GM12878 (cell line): ENCODE measurements at regions of chr16 and their contacts with region 1.

Region 1: DNA sequence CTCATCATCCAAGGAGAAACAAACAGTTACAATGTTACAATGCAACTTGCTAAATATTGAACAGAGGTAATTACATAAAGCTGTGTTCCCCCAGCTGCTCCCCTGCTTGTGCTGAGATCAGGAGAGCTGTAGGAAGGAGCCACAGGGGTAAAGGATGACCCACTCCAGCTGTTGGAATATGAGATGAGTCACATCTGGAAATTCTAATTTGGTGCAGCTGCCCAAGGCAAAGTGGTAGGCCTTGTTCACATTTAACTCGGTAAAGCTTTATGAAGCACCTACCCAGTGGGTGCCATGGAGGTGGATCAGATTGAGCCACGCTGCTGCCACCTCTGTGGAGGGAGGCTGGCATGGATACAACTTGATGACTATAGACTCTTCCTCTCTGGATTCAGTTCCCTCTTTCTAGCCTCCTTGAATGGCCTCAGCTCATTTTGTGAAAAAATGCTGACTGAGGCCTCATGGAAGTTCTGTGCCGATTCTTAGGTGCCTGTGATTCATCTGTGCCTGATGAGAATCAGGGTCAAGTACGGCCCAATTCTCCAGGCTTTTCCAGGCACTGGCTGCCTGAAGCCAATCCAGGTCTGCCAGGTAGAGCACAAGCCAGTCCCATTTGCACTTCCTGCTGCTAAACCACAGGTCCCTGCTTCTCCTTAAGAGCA is 7.4 kb downstream of the ZNF689 start:
- DNase-seq: no peak
- ATAC-seq: no peak
- H3K4me3 ChIP-seq: no peak overlapping the region
- H3K27ac ChIP-seq: no peak overlapping the region
- H3K4me1 ChIP-seq: no peaks in the 10 kb centered on the region; the same call in 1 of the 2 replicates
- H3K27me3 ChIP-seq: no peaks in the 10 kb centered on the region
- CTCF ChIP-seq: no peak
- EP300 ChIP-seq: no peak
- POLR2A ChIP-seq: 0 out of 2 replicates have a peak, but pooled peaks have one; percentile 10
- RAD21 ChIP-seq: no peak

Region 2: DNA sequence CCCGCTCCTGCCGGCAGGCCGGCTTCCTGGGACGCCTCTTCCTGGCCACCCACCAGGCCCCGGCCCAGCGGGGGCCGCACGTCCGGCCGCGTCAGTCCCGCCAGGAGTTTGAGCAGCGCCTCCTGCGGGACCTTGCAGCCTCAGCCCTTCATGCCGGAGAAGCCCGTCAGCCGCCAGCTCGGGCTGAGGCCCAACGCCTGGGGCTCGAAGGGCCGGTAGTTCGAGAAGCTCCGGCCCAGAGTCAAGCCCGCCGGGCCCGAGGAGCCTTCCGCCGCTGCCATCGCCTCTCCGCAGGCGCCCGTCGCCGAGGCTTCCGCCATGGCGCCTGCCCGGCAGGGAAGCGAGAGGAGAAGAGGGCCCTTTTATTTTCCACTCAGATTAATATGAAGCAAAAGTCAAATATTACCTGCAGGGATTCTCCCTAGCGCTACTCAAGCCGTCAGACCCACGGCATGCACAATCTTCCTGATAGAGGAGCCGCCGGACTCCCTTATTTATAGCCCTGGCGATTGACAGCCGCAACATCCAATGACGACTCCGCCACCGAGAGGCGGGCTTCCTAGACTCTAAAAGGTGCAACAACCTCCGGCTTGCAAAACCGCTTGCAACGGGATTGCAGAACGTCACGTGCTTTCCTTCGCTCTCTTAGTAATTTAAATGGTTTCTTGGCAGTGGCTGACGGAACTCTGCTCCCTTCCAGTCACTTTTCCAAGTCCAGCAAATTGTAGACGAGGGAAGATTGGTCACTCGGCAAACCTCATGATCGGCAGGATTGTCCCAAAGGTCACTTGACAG is 157.1 kb before region 1 on chr16 and contains the start of gene SEPHS2:
- CTCF ChIA-PET with region 1: interaction called, 18 read pairs
- POLR2A ChIA-PET with region 1: interaction called, 3 read pairs
- RAD21 ChIA-PET with region 1: interaction called, 6 read pairs
- SMC1A ChIA-PET with region 1: interaction called, 8 read pairs
- in situ Hi-C with region 1: no loop called
- intact Hi-C with region 1: no loop called
- DNase-seq: peak; percentile 84
- ATAC-seq: peak; percentile 94
- H3K4me3 ChIP-seq: peak within 1 kb of the TSS; percentile 79
- H3K27ac ChIP-seq: peak within 1 kb of the TSS; percentile 85
- H3K4me1 ChIP-seq: peaks cover 10% of the 10 kb centered on the region
- H3K27me3 ChIP-seq: no peaks in the 10 kb centered on the region
- CTCF ChIP-seq: peak; percentile 38 to 52 (median 49); a peak in 5 of 6 replicates
- EP300 ChIP-seq: no peak
- POLR2A ChIP-seq: peak; percentile 90
- RAD21 ChIP-seq: no peak
- polyA plus RNA-seq, gene SEPHS2: 21.6 to 37.4 TPM

Region 3: DNA sequence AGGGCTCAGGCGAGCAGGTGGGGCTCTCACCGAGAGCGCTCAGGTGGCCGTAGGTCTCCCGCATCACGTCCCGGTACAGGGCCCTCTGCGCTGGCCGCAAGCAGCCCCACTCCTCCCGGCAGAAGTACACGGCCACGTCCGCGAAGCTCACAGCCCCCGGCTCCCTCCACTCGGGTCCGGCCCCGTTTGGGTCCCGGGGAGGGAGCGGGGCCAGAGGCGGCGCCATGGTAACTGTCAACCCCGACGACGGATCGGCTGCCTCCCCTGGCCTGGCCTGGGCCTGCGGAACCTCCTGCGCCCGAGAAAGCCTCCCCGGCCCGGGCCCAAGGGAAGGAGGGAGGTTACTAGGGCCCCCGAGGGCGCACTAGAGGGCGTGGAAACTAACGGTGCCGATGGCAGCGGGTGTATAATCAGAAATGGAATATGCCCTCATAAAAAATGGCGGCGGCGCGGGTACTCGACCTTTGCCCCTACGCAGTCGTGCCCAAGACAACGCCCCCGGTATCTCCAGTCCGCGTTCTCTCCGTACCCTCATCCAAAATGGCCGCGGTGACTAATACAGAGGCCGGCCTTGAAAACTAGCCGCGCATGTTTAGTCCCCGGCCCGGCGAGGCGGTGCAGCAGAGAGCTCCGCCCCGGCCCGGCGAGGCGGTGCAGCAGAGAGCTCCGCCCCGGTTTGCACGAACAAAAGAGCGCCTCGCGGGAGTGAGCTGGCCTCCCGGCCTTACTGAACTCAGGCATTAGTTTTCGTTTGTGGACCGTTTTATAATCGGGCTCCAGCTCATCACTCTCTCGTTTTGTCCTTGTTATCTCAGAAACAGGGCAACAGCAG is 44.6 kb before region 1 on chr16 and contains the start of gene ZNF764:
- CTCF ChIA-PET with region 1: interaction called, 19 read pairs
- POLR2A ChIA-PET with region 1: no interaction called
- RAD21 ChIA-PET with region 1: interaction called, 20 read pairs
- SMC1A ChIA-PET with region 1: interaction called, 7 read pairs
- in situ Hi-C with region 1: no loop called
- intact Hi-C with region 1: no loop called
- DNase-seq: peak; percentile 84
- ATAC-seq: peak; percentile 96
- H3K4me3 ChIP-seq: peak within 1 kb of the TSS; percentile 87
- H3K27ac ChIP-seq: peak within 1 kb of the TSS; percentile 85
- H3K4me1 ChIP-seq: no peaks in the 10 kb centered on the region
- H3K27me3 ChIP-seq: no peaks in the 10 kb centered on the region
- CTCF ChIP-seq: peak; percentile 1 to 9 (median 2); a peak in 1 of 6 replicates
- EP300 ChIP-seq: no peak
- POLR2A ChIP-seq: peak; percentile 68
- RAD21 ChIP-seq: no peak
- polyA plus RNA-seq, gene ZNF764: 0.61 to 1.6 TPM

Region 4: GRCh38 chr16:30585400-30586189 is 17.2 kb before region 1 on chr16 and contains the start of gene ZNF785:
- CTCF ChIA-PET with region 1: interaction called, 29 read pairs
- POLR2A ChIA-PET with region 1: interaction called, 5 read pairs
- RAD21 ChIA-PET with region 1: no interaction called
- SMC1A ChIA-PET with region 1: interaction called, 5 read pairs
- in situ Hi-C with region 1: no loop called
- intact Hi-C with region 1: no loop called
- DNase-seq: peak; percentile 97
- ATAC-seq: peak; percentile 98
- H3K4me3 ChIP-seq: peak within 1 kb of the TSS; percentile 98
- H3K27ac ChIP-seq: peak within 1 kb of the TSS; percentile 89
- H3K4me1 ChIP-seq: peaks cover 3% of the 10 kb centered on the region; the same call in 1 of the 2 replicates
- H3K27me3 ChIP-seq: no peaks in the 10 kb centered on the region
- CTCF ChIP-seq: peak in 2 of 3 experiments; percentile 14 to 33; a peak in 3 of 6 replicates
- EP300 ChIP-seq: no peak
- POLR2A ChIP-seq: peak; percentile 51
- RAD21 ChIP-seq: no peak
- polyA plus RNA-seq, gene ZNF785: 0.87 to 1.5 TPM

Region 5: DNA sequence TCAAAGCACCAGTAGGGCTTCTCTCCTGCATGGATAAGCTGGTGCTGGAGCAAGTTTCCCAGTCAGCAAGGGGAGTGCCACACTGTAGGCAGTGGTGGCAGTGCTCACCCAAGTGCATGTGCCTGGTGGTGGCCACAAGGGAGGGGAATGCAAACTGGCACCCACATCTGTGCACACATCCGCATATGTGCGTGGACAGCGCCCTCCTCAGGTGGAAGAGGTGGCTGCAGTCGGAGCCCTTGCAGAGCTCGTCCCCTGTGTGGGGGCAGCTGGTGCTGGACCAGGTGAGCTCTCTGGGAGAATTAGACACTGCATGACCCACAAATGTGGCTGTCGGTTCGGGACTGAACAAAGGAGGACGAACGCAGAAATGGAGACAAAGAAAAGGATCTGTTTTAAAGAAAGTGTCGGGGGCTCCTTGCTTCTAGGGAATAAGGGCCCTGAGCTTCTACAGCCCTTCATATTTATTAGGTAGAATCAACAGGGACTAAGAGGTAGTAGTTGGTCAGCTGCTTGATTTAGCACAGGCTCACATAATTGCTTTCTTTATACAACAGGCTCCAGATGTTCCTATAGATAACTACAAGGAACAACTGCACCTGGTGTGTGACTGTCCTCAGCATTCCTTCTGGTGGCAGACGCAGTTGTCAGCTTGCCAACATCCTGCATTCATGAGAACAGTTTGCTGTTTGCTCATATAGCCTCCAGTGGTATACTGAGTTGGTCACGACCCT is 12.8 kb after region 1 on chr16:
- CTCF ChIA-PET with region 1: interaction called, 27 read pairs
- POLR2A ChIA-PET with region 1: interaction called, 7 read pairs
- RAD21 ChIA-PET with region 1: interaction called, 9 read pairs
- SMC1A ChIA-PET with region 1: interaction called, 6 read pairs
- in situ Hi-C with region 1: no loop called
- intact Hi-C with region 1: no loop called
- DNase-seq: no peak
- ATAC-seq: peak; percentile 82
- H3K4me3 ChIP-seq: no peak overlapping the region
- H3K27ac ChIP-seq: no peak overlapping the region
- H3K4me1 ChIP-seq: no peaks in the 10 kb centered on the region
- H3K27me3 ChIP-seq: no peaks in the 10 kb centered on the region
- CTCF ChIP-seq: peak; percentile 72 to 75 (median 74)
- EP300 ChIP-seq: no peak
- POLR2A ChIP-seq: no peak
- RAD21 ChIP-seq: peak; percentile 72

Region 6: DNA sequence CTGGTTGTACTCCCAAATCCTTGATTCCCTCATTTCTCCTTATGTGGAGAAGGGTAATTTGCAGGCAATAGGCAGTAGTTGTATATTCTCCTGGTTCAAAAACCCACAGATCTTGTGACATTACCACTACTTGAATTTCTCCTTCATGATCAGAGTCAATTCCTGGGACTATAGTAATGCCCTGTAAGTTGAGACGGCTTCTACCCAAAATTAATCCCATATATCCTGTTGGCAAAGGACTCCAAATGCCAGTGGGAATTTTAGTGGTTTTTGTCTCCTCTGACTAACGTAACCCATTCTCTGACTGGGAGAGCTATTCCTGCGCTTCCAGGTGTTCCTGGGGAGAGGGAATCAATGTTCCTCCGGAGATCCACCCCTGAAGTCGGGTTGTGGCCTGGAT is 19.0 kb after region 1 on chr16:
- CTCF ChIA-PET with region 1: interaction called, 54 read pairs
- POLR2A ChIA-PET with region 1: no interaction called
- RAD21 ChIA-PET with region 1: interaction called, 9 read pairs
- SMC1A ChIA-PET with region 1: interaction called, 4 read pairs
- in situ Hi-C with region 1: no loop called
- intact Hi-C with region 1: no loop called
- DNase-seq: no peak
- ATAC-seq: no peak
- H3K4me3 ChIP-seq: no peak overlapping the region
- H3K27ac ChIP-seq: no peak overlapping the region
- H3K4me1 ChIP-seq: no peaks in the 10 kb centered on the region
- H3K27me3 ChIP-seq: no peaks in the 10 kb centered on the region
- CTCF ChIP-seq: no peak
- EP300 ChIP-seq: no peak
- POLR2A ChIP-seq: no peak
- RAD21 ChIP-seq: no peak

Region 7: GRCh38 chr16:30628627-30629540 is 26.1 kb after region 1 on chr16:
- CTCF ChIA-PET with region 1: interaction called, 54 read pairs
- POLR2A ChIA-PET with region 1: no interaction called
- RAD21 ChIA-PET with region 1: interaction called, 6 read pairs
- SMC1A ChIA-PET with region 1: interaction called, 14 read pairs
- in situ Hi-C with region 1: no loop called
- intact Hi-C with region 1: no loop called
- DNase-seq: no peak
- ATAC-seq: peak; percentile 97
- H3K4me3 ChIP-seq: no peak overlapping the region
- H3K27ac ChIP-seq: no peak overlapping the region
- H3K4me1 ChIP-seq: peaks cover 5% of the 10 kb centered on the region
- H3K27me3 ChIP-seq: no peaks in the 10 kb centered on the region
- CTCF ChIP-seq: peak; percentile 90 to 95 (median 93); a peak in 5 of 6 replicates
- EP300 ChIP-seq: no peak
- POLR2A ChIP-seq: no peak
- RAD21 ChIP-seq: peak; percentile 81